AG04449 (cell line): ENCODE measurements at regions of chr4 and their contacts with region 1.

Region 1: GRCh38 chr4:87838890-87839591 is 6.3 kb downstream of the MEPE start:
- DNase-seq: no peak
- H3K4me3 ChIP-seq: no peak overlapping the region
- CTCF ChIP-seq: peak; percentile 50

Region 2: GRCh38 chr4:87543835-87544461 is 295.1 kb before region 1 on chr4:
- CTCF ChIA-PET with region 1: interaction called, 33 read pairs
- POLR2A ChIA-PET with region 1: no interaction called
- DNase-seq: no peak
- H3K4me3 ChIP-seq: no peak overlapping the region
- CTCF ChIP-seq: peak; percentile 38

Region 3: DNA sequence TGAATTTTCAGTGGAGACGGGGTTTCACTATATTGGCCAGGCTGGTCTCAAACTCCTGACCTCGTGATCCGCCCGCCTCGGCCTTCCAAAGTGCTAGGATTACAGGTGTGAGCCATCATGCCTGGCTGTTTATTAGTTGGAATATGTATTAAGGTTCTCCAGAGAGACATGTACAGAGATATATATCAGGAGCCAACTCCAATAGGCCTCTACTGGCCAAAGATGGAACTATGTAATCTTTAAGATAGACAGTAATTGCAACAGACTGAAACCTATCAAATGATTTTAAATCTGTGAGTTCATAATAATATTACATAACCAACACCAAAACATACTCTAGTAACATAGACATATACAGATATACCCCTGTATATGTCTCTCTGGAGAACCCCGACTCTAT is 194.8 kb before region 1 on chr4:
- CTCF ChIA-PET with region 1: no interaction called
- POLR2A ChIA-PET with region 1: no interaction called
- DNase-seq: no peak
- H3K4me3 ChIP-seq: no peak overlapping the region
- CTCF ChIP-seq: no peak

Region 4: GRCh38 chr4:87679449-87680169 is 159.4 kb before region 1 on chr4:
- CTCF ChIA-PET with region 1: interaction called, 130 read pairs
- POLR2A ChIA-PET with region 1: no interaction called
- DNase-seq: no peak
- H3K4me3 ChIP-seq: no peak overlapping the region
- CTCF ChIP-seq: peak; percentile 62

Region 5: DNA sequence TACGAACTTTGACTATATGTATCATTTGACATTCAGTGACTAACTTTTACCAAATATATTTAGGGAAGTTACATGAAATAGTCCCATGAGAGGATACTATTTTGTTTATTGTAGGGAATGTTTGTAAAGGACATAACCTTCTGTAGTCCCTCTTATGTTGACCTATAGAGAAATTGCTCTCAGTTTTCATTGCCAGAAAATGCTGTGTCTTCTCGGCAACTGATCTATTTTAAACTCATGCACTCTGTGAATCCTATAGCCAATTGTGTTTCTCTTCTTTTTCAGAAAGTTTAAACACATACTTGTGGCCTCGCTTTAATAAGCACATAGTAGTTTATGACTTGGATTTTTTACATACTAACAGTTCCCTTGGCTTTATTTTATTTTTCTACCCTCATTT is 150.7 kb before region 1 on chr4:
- CTCF ChIA-PET with region 1: interaction called, 13 read pairs
- POLR2A ChIA-PET with region 1: no interaction called
- DNase-seq: no peak
- H3K4me3 ChIP-seq: no peak overlapping the region
- CTCF ChIP-seq: no peak

Region 6: GRCh38 chr4:87819281-87819919 is 19.6 kb before region 1 on chr4:
- CTCF ChIA-PET with region 1: interaction called, 22 read pairs
- POLR2A ChIA-PET with region 1: no interaction called
- DNase-seq: no peak
- H3K4me3 ChIP-seq: no peak overlapping the region
- CTCF ChIP-seq: no peak